Activated CD4-positive, alpha-beta T cell treated with anti-CD3 and anti-CD28 coated beads for 36 hours (primary cell): ENCODE measurements at regions of chr13 and their contacts with region 1.

Region 1: DNA sequence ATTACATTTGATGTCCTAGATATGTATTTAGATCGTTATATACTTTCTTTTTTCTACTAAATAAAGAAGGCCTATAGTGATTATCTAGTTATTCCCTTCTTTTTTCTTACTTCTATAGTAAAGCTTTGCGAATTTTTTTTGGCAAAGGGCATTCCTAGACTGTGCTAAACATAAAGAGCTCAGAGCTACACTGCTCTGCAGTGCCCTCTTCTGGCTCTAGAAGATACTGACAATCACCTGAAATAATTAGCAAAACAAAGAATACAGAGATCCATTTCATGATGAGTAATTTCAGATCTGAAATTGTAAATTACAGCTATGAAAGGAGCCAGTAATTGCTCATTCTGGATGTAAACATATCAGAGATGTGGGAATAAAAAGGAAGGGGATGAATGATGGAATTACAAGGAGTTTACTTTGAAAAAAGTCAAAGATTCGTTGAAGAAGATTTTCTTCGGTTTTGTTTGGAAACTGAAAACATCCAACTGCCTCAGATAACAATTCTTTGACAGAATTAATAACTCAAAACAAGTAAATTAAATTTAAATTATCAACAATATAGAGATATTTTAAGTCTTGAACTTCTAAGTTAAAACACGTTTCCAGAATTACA is 288.5 kb downstream of the NALCN start:
- DNase-seq: peak; percentile 28
- ATAC-seq: peak; percentile 76
- H3K4me3 Mint-ChIP-seq: no peak overlapping the region
- H3K27ac Mint-ChIP-seq: no peak overlapping the region
- H3K4me1 Mint-ChIP-seq: peaks cover 2% of the 10 kb centered on the region
- H3K27me3 Mint-ChIP-seq: peaks cover 6% of the 10 kb centered on the region

Region 2: DNA sequence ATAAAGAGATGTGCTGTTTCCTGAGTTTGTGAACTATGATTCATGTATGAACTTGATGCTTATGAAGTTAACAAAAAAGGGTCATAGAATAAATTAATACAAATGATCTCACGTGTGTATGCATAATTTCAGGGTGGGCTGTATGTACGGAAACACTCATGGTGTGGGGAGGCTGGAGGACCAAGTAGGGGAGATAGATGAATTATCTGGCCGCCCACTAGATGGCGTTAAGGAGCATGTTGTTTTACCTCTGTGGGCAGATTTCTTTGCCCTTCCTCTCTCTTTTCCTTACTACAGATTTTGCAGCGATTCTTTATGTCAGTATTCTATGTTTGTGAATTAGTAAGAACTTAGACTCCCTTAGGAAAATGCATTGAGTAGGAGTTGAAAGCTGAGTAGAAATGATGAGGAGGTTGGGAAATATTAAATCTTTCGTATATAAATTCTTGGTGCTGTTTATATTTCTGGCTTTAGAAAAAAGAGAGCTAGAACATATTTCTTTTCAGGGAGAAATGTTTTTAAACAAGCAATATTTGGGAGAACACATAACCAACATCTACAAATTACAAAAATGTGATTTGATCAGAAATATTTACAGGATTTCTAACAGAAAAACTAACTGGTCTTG is 405.8 kb before region 1 on chr13:
- CTCF ChIA-PET with region 1: interaction called, 6 read pairs
- POLR2A ChIA-PET with region 1: no interaction called
- intact Hi-C with region 1: loop called (anchors 2 kb)
- DNase-seq: peak; percentile 77
- ATAC-seq: peak; percentile 63
- H3K4me3 Mint-ChIP-seq: no peak overlapping the region
- H3K27ac Mint-ChIP-seq: no peak overlapping the region
- H3K4me1 Mint-ChIP-seq: no peaks in the 10 kb centered on the region
- H3K27me3 Mint-ChIP-seq: peaks cover 7% of the 10 kb centered on the region

Region 3: GRCh38 chr13:100773923-100774663 is 353.8 kb before region 1 on chr13:
- CTCF ChIA-PET with region 1: no interaction called
- POLR2A ChIA-PET with region 1: no interaction called
- intact Hi-C with region 1: no loop called
- DNase-seq: no peak
- ATAC-seq: no peak
- H3K4me3 Mint-ChIP-seq: no peak overlapping the region
- H3K27ac Mint-ChIP-seq: no peak overlapping the region
- H3K4me1 Mint-ChIP-seq: peaks cover 2% of the 10 kb centered on the region
- H3K27me3 Mint-ChIP-seq: no peaks in the 10 kb centered on the region